A673 (cell line): ENCODE measurements at regions of chr7 and their contacts with region 1.

Region 1: DNA sequence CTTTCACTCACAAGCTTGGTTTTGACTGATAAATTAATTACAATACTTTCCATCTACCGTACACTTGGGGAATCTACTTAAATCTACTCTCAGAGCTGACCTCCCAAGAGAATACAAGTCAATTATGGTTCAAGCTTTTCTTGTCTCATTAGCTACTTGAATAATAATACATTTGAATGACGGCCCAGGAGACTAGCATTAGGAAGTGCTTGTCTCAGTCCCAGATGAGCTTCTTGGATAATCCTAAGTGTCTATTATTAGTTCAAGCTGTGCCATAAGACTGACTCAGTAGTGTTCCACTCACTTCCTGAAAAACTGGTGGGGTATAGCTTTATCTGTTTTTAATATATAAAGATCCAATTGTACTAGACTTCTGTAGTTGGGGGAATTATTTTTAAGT is 100.2 kb downstream of the GNAT3 start:
- DNase-seq: peak; percentile 94
- H3K4me3 ChIP-seq: no peak overlapping the region
- H3K27ac ChIP-seq: no peak overlapping the region
- H3K4me1 ChIP-seq: peaks cover 9% of the 10 kb centered on the region
- H3K27me3 ChIP-seq: peaks cover 51% of the 10 kb centered on the region
- CTCF ChIP-seq: no peak

Region 2: GRCh38 chr7:80439894-80440821 is 28.5 kb after region 1 on chr7:
- CTCF ChIA-PET with region 1: no interaction called
- POLR2A ChIA-PET with region 1: no interaction called
- intact Hi-C with region 1: loop called (anchors 1 kb)
- DNase-seq: peak; percentile 96
- H3K4me3 ChIP-seq: no peak overlapping the region
- H3K27ac ChIP-seq: peak overlapping the region; percentile 70
- H3K4me1 ChIP-seq: peaks cover 21% of the 10 kb centered on the region
- H3K27me3 ChIP-seq: no peaks in the 10 kb centered on the region
- CTCF ChIP-seq: no peak

Region 3: GRCh38 chr7:80593869-80594582 is 182.4 kb after region 1 on chr7:
- CTCF ChIA-PET with region 1: no interaction called
- POLR2A ChIA-PET with region 1: no interaction called
- intact Hi-C with region 1: no loop called
- DNase-seq: no peak
- H3K4me3 ChIP-seq: no peak overlapping the region
- H3K27ac ChIP-seq: no peak overlapping the region
- H3K4me1 ChIP-seq: peaks cover 4% of the 10 kb centered on the region
- H3K27me3 ChIP-seq: no peaks in the 10 kb centered on the region
- CTCF ChIP-seq: no peak